ENCODE measurements at regions of chr2 and their contacts with region 1.

Region 1: GRCh38 chr2:239035361-239036078 is 187.6 kb downstream of the TWIST2 start:
- DNase-seq: peak; percentile 53 to 91 (median 88)
- ATAC-seq: peak; percentile 98
- H3K4me3 ChIP-seq: no peak overlapping the region
- H3K27ac ChIP-seq: no peak overlapping the region
- H3K4me1 ChIP-seq: peaks cover 0 to 8% of the 10 kb centered on the region in 2 experiments; a peak in 2 of 5 replicates
- H3K27me3 ChIP-seq: peaks cover 9 to 28% of the 10 kb centered on the region in 2 experiments; a peak in 3 of 5 replicates
- CTCF ChIP-seq: peak; percentile 55 to 70 (median 63); a peak in 5 of 6 replicates
- EP300 ChIP-seq: no peak
- POLR2A ChIP-seq: no peak
- RAD21 ChIP-seq: peak; percentile 25 to 45

Region 2: GRCh38 chr2:238684362-238685326 is 350.9 kb before region 1 on chr2:
- CTCF ChIA-PET with region 1: no interaction called
- POLR2A ChIA-PET with region 1: no interaction called
- in situ Hi-C with region 1: no loop called
- intact Hi-C with region 1: no loop called
- DNase-seq: no peak
- ATAC-seq: no peak
- H3K4me3 ChIP-seq: no peak overlapping the region
- H3K27ac ChIP-seq: no peak overlapping the region
- H3K4me1 ChIP-seq: no peaks in the 10 kb centered on the region
- H3K27me3 ChIP-seq: peaks cover 0 to 12% of the 10 kb centered on the region in 2 experiments; a peak in 3 of 5 replicates
- CTCF ChIP-seq: no peak
- EP300 ChIP-seq: no peak
- POLR2A ChIP-seq: no peak
- RAD21 ChIP-seq: no peak

Region 3: GRCh38 chr2:239267288-239267951 is 231.9 kb after region 1 on chr2:
- CTCF ChIA-PET with region 1: no interaction called
- POLR2A ChIA-PET with region 1: no interaction called
- in situ Hi-C with region 1: no loop called
- intact Hi-C with region 1: loop called (anchors 10 kb)
- DNase-seq: peak; percentile 40 to 77 (median 56)
- ATAC-seq: peak; percentile 92
- H3K4me3 ChIP-seq: no peak overlapping the region
- H3K27ac ChIP-seq: peak overlapping the region; percentile 77; the same call in 2 of the 3 replicates
- H3K4me1 ChIP-seq: peaks cover 22 to 45% of the 10 kb centered on the region in 2 experiments; a peak in 4 of 5 replicates
- H3K27me3 ChIP-seq: no peaks in the 10 kb centered on the region
- CTCF ChIP-seq: peak; percentile 65 to 75 (median 71)
- EP300 ChIP-seq: 0 out of 2 replicates have a peak, but pooled peaks have one; percentile 20
- POLR2A ChIP-seq: no peak
- RAD21 ChIP-seq: peak; percentile 65 to 85